Activated CD8-positive, alpha-beta memory T cell treated with anti-CD3 and anti-CD28 coated beads, Interleukin-2, amount 10 ng/mL, durations not matched to agents 7 days and 5 days (primary cell): ENCODE measurements at regions of chr2 and their contacts with region 1.

Region 1: DNA sequence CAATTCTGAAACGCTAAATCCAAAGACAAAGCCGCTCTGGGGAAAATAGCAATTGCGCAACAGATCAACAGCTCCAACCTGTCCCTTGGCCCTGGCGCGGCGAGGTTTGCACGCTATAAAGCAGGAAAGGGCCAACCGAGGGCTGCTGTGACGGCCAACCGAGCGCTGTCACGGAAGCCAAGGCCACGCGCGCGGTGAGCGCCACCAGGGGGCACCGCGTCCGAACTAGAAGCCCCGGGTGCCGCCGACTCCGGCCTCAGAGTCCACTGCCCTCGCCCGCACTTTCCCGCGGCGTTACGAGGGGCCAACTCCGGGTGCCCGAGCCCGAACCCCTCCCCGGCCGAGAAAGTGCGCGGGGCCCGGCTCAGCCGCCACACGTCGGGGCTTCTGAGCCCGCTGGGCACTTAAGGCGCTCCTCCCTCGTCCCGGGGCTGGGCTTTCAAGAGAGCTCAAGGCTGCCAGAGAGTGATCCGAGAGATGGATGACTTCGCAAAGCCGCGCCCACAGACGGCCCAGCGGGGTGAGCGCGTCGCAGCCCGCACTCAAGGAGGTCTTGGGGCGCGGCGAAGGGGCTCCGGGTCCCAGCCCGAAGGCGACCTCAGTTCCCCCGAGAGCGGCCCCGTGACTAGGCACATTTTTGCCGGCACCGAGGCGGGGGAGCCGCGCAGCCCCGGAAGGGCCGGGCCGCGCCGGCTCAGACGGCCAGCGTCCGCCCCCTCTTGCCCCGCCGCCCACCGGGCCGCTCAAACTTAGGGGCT is 897 bp downstream of the NFE2L2 start:
- DNase-seq: peak; percentile 96
- ATAC-seq: peak; percentile 65
- H3K4me3 Mint-ChIP-seq: peak overlapping the region; percentile 97
- H3K27ac Mint-ChIP-seq: peak overlapping the region; percentile 96
- H3K4me1 Mint-ChIP-seq: peaks cover 55% of the 10 kb centered on the region
- H3K27me3 Mint-ChIP-seq: no peaks in the 10 kb centered on the region

Region 2: GRCh38 chr2:177195194-177195593 is 68.4 kb before region 1 on chr2:
- CTCF ChIA-PET with region 1: interaction called, 17 read pairs
- DNase-seq: no peak
- ATAC-seq: no peak
- H3K4me3 Mint-ChIP-seq: no peak overlapping the region
- H3K27ac Mint-ChIP-seq: no peak overlapping the region
- H3K4me1 Mint-ChIP-seq: peaks cover 11% of the 10 kb centered on the region
- H3K27me3 Mint-ChIP-seq: no peaks in the 10 kb centered on the region

Region 3: GRCh38 chr2:177229448-177230242 is 34.0 kb before region 1 on chr2:
- CTCF ChIA-PET with region 1: interaction called, 19 read pairs
- DNase-seq: no peak
- ATAC-seq: peak; percentile 21
- H3K4me3 Mint-ChIP-seq: no peak overlapping the region
- H3K27ac Mint-ChIP-seq: peak overlapping the region; percentile 3
- H3K4me1 Mint-ChIP-seq: peaks cover 15% of the 10 kb centered on the region
- H3K27me3 Mint-ChIP-seq: no peaks in the 10 kb centered on the region

Region 4: DNA sequence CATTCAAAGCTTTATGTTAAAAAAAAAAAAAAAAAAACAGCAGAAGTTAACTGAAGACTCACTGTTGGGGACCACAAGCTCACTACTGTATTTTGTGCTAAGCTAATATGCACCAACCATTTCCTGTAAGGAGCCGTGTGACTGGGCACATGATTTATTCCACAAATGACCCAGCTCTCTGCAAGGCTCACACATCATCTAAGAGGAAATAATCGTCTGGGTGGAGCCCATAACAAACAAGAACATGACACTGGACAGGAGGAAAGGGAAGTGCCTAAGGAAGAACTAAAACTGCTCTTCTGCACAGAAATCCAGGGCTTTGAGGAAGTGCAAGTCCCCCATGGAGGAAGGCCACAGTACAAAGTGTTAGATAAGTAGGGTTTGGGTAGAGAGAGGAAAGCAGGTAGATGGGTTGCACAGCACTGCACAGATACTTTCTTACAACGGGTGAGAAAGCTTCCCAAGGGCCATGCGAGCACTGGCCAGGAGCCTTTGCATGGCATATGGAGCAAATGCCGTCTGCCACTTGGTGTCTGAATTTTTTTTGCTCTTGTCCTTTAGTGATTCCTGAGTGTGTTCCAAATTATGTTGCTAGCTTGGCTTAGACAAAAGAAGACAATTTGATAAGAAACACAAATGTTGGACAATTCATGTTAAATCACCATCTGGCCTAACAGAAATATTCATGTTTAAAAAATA is 23.5 kb before region 1 on chr2:
- CTCF ChIA-PET with region 1: interaction called, 36 read pairs
- DNase-seq: peak; percentile 77
- ATAC-seq: peak; percentile 95
- H3K4me3 Mint-ChIP-seq: peak overlapping the region; percentile 34
- H3K27ac Mint-ChIP-seq: peak overlapping the region; percentile 88
- H3K4me1 Mint-ChIP-seq: peaks cover 65% of the 10 kb centered on the region
- H3K27me3 Mint-ChIP-seq: no peaks in the 10 kb centered on the region

Region 5: DNA sequence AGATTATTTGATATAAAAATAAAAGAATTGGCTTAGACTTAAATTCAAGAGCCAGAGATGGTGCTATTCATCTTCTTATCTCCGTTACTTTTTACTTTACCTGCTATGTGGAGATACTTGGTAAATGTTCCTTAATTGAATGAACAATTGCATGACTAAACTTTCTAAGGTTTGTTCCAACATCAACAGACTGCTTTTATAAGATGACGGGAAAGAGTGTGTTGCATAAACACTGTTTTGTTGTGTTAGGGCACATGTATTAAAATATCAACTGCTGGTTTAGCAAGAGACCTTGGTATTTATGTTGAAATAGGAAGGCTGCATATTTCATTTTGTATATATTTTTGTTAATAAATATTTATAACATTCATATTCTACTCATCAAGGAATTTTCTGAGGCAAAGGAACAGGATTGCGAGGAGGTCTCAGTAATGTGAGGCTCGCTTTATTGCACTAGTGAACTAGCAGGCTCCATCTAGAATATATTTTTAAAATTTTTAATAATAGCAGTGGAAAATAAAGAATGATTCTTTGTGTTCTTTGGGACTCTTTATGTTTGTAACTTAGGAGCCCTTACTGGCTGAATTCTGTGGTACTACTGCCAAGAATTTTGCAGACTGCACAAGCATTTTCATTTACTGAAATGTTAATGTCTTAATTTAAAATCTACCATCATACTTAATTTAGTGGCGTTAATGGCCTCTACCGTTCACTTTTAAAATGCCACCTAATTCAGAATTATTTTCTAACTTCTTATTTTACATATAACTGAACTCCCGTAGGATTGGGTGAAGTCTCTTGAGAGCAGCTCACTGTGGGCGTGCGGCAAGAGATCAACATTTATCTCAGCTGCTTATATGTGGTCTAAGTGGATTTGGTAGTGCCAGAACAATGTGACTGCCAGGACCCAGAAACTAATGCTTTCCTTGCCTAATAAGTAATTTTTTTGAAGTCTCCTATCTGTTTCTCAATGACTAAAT is 11.7 kb after region 1 on chr2:
- CTCF ChIA-PET with region 1: interaction called, 314 read pairs
- DNase-seq: no peak
- ATAC-seq: no peak
- H3K4me3 Mint-ChIP-seq: no peak overlapping the region
- H3K27ac Mint-ChIP-seq: no peak overlapping the region
- H3K4me1 Mint-ChIP-seq: peaks cover 20% of the 10 kb centered on the region
- H3K27me3 Mint-ChIP-seq: no peaks in the 10 kb centered on the region

Region 6: GRCh38 chr2:177296040-177296439 is 32.4 kb after region 1 on chr2:
- CTCF ChIA-PET with region 1: interaction called, 314 read pairs
- DNase-seq: no peak
- ATAC-seq: peak; percentile 63
- H3K4me3 Mint-ChIP-seq: no peak overlapping the region
- H3K27ac Mint-ChIP-seq: peak overlapping the region; percentile 39
- H3K4me1 Mint-ChIP-seq: peaks cover 36% of the 10 kb centered on the region
- H3K27me3 Mint-ChIP-seq: no peaks in the 10 kb centered on the region

Region 7: GRCh38 chr2:177332041-177332991 is 68.7 kb after region 1 on chr2:
- CTCF ChIA-PET with region 1: interaction called, 38 read pairs
- DNase-seq: peak; percentile 55
- ATAC-seq: peak; percentile 83
- H3K4me3 Mint-ChIP-seq: no peak overlapping the region
- H3K27ac Mint-ChIP-seq: peak overlapping the region; percentile 33
- H3K4me1 Mint-ChIP-seq: peaks cover 9% of the 10 kb centered on the region
- H3K27me3 Mint-ChIP-seq: no peaks in the 10 kb centered on the region

Region 8: GRCh38 chr2:177906041-177906718 is 642.5 kb after region 1 on chr2:
- CTCF ChIA-PET with region 1: no interaction called
- DNase-seq: peak; percentile 75
- ATAC-seq: peak; percentile 83
- H3K4me3 Mint-ChIP-seq: no peak overlapping the region
- H3K27ac Mint-ChIP-seq: no peak overlapping the region
- H3K4me1 Mint-ChIP-seq: peaks cover 8% of the 10 kb centered on the region
- H3K27me3 Mint-ChIP-seq: no peaks in the 10 kb centered on the region